ENCODE measurements at regions of chr12 and their contacts with region 1.

Region 1: DNA sequence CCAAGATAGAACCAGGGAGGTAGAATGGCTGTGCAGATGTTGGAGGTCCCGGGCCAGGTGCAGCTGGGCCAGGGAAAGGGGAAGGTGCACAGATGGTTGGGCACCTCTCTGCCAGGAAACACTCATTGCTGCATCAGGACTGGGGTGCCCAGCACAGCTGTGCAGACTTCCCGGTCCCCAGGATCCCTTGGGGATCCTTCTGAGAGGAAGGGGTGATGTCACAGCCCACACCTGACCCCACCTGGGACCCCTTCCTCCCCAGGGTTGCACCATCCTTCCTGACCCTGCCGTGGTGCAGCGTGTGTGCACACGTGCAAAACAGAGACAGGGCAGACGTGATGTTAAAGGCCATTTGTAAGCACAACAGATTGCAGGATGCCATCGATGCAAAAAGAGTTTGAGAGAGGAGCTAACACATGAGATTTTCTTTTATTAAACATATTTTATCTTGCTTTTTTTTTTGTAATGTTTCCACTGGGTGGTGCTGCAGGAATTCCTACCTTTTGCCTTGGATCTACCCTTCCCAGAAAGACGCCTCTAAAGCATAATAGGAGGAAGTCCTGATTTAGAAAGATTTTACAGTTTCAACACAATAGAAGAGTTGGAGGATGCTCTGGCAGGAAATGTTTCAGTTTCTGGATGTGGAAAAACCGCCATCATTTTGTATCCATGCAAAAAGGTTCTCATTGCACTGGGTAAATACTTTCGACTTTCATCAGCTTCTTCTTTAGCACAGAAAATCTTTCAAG is 14.8 kb downstream of the ELK3 start:
- DNase-seq: peak; percentile 34
- H3K4me3 ChIP-seq: no peak overlapping the region
- H3K27ac ChIP-seq: peak overlapping the region; percentile 6 to 56 (median 32)
- H3K4me1 ChIP-seq: peaks cover 0 to 37% (median 10%) of the 10 kb centered on the region in 4 donors
- H3K27me3 ChIP-seq: no peaks in the 10 kb centered on the region
- CTCF ChIP-seq: peak in 1 of 5 experiments; percentile 8
- EP300 ChIP-seq: no peak
- POLR2A ChIP-seq: no peak

Region 2: GRCh38 chr12:96061864-96062453 is 147.0 kb before region 1 on chr12:
- in situ Hi-C with region 1: loop called (anchors 5 to 10 kb)
- intact Hi-C with region 1: loop called (anchors 5 kb)
- DNase-seq: peak; percentile 83
- H3K4me3 ChIP-seq: no peak overlapping the region
- H3K27ac ChIP-seq: no peak overlapping the region
- H3K4me1 ChIP-seq: no peaks in the 10 kb centered on the region
- H3K27me3 ChIP-seq: no peaks in the 10 kb centered on the region
- CTCF ChIP-seq: peak; percentile 79 to 94 (median 89)
- EP300 ChIP-seq: no peak
- POLR2A ChIP-seq: no peak

Region 3: GRCh38 chr12:96069511-96070231 is 139.3 kb before region 1 on chr12:
- in situ Hi-C with region 1: loop called (anchors 5 to 10 kb)
- intact Hi-C with region 1: loop called (anchors 5 kb)
- DNase-seq: no peak
- H3K4me3 ChIP-seq: no peak overlapping the region
- H3K27ac ChIP-seq: no peak overlapping the region
- H3K4me1 ChIP-seq: peaks cover 0 to 5% (median 0%) of the 10 kb centered on the region in 4 donors
- H3K27me3 ChIP-seq: no peaks in the 10 kb centered on the region
- CTCF ChIP-seq: no peak
- EP300 ChIP-seq: no peak
- POLR2A ChIP-seq: no peak

Measured in transverse colon (tissue), 4 donors.